ENCODE measurements at regions of chr12 and their contacts with region 1.

Region 1: DNA sequence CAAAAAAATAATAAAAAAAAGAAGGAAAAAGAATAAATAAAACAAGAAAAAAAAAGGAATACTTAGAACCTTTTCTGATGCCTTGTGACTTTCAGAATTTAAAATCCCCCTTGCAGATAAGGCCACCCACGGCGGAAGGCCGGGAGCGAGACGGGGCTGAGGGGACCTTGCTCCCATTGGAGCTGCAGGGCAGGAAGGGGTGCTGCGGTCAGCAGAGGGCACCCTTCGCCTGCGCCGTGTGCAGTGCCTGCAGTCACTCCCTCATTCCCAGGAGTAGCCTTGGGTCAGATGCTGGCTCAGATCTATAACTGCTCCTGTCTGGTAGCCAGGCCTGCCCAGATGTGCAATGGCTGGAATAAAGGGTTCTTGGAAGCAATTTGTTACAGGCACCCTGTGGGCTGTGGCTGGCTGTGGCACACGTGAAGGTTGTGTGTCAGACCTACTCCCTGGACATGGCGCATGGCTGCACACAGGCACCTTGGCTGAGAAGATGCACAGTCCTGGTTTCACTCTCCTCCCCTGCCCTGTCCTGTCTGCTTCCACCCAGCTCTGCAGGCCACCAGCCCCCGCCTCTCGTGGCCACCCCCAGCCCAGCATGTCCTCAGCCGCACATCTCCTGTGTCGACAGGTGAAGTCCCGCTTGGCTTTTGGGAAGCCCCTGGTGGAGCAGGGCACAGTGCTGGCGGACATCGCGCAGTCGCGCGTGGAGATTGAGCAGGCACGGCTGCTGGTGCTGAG is 13.4 kb upstream of the ALDH2 start:
- DNase-seq: peak; percentile 65 to 71
- ATAC-seq: peak; percentile 71 to 81 (median 78)
- H3K4me3 ChIP-seq: no peak overlapping the region
- H3K27ac ChIP-seq: peak overlapping the region in 8 of 10 donors; percentile 61 to 88 (median 73)
- H3K4me1 ChIP-seq: peaks cover 19 to 66% (median 44%) of the 10 kb centered on the region in 9 donors
- H3K27me3 ChIP-seq: no peaks in the 10 kb centered on the region
- CTCF ChIP-seq: peak; percentile 60 to 93 (median 86)

Region 2: DNA sequence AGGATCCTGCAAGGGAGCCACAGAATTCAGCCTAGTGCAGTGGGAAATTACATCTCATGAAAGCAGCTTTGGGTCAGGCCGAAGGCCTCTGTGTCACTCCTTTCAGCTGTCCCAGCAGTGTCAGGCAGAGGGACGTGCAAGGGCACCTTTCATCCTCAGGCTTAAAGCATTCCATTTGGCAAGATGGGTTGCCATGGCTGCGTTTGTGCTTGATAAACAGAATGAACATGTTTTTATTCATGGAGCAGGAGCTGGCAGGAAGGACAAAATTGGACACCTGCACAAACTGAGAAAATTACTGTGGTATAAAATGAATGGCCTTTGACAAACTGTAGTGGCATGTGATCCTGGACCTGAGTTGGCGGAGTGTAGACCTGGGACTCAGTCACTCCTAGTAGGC is 38.0 kb before region 1 on chr12:
- intact Hi-C with region 1: no loop called
- DNase-seq: peak; percentile 47 to 81
- ATAC-seq: peak; percentile 85 to 98 (median 94)
- H3K4me3 ChIP-seq: no peak overlapping the region
- H3K27ac ChIP-seq: peak overlapping the region; percentile 14 to 88 (median 82)
- H3K4me1 ChIP-seq: peaks cover 0 to 16% (median 5%) of the 10 kb centered on the region in 9 donors
- H3K27me3 ChIP-seq: no peaks in the 10 kb centered on the region
- CTCF ChIP-seq: no peak

Region 3: GRCh38 chr12:111788178-111788654 is 34.9 kb after region 1 on chr12:
- intact Hi-C with region 1: loop called in 8 of 10 experiments (anchors 1 to 5 kb)
- DNase-seq: peak; percentile 31 to 43
- ATAC-seq: peak; percentile 9 to 80 (median 67)
- H3K4me3 ChIP-seq: no peak overlapping the region
- H3K27ac ChIP-seq: peak overlapping the region in 1 of 10 donors; percentile 2
- H3K4me1 ChIP-seq: peaks cover 4 to 23% (median 11%) of the 10 kb centered on the region in 9 donors
- H3K27me3 ChIP-seq: no peaks in the 10 kb centered on the region
- CTCF ChIP-seq: peak in 7 of 9 donors; percentile 45 to 65 (median 58)

Region 4: GRCh38 chr12:111812881-111813741 is 59.8 kb after region 1 on chr12:
- intact Hi-C with region 1: loop called (anchors 1 to 5 kb)
- DNase-seq: peak; percentile 52 to 76
- ATAC-seq: peak; percentile 86 to 95 (median 88)
- H3K4me3 ChIP-seq: no peak overlapping the region
- H3K27ac ChIP-seq: peak overlapping the region in 1 of 10 donors; percentile 22
- H3K4me1 ChIP-seq: peaks cover 0 to 8% (median 4%) of the 10 kb centered on the region in 9 donors
- H3K27me3 ChIP-seq: no peaks in the 10 kb centered on the region
- CTCF ChIP-seq: peak; percentile 68 to 87 (median 80)